CD4-positive, alpha-beta memory T cell (primary cell): ENCODE measurements at regions of chr10 and their contacts with region 1.

Region 1: GRCh38 chr10:84537447-84537931 is 209.1 kb downstream of the CCSER2 start:
- DNase-seq: peak; percentile 44 to 60 (median 57)
- H3K4me3 ChIP-seq: no peak overlapping the region
- H3K4me3 Mint-ChIP-seq: peak overlapping the region in 1 of 8 donors; percentile 54
- H3K27ac ChIP-seq: no peak overlapping the region
- H3K27ac Mint-ChIP-seq: no peak overlapping the region
- H3K4me1 ChIP-seq: peaks cover 7% of the 10 kb centered on the region
- H3K4me1 Mint-ChIP-seq: peaks cover 7 to 14% (median 9%) of the 10 kb centered on the region in 4 donors
- H3K27me3 ChIP-seq: no peaks in the 10 kb centered on the region
- H3K27me3 Mint-ChIP-seq: peaks cover 8 to 23% of the 10 kb centered on the region in 2 donors

Region 2: GRCh38 chr10:84147347-84147746 is 390.1 kb before region 1 on chr10:
- CTCF ChIA-PET with region 1: interaction called, 11 read pairs
- POLR2A ChIA-PET with region 1: no interaction called
- intact Hi-C with region 1: loop called (anchors 10 kb)
- DNase-seq: no peak
- H3K4me3 ChIP-seq: no peak overlapping the region
- H3K4me3 Mint-ChIP-seq: no peak overlapping the region
- H3K27ac ChIP-seq: no peak overlapping the region
- H3K27ac Mint-ChIP-seq: peak overlapping the region in 2 of 7 donors; percentile 50 to 65
- H3K4me1 ChIP-seq: no peaks in the 10 kb centered on the region
- H3K4me1 Mint-ChIP-seq: peaks cover 0 to 9% (median 2%) of the 10 kb centered on the region in 4 donors
- H3K27me3 ChIP-seq: no peaks in the 10 kb centered on the region
- H3K27me3 Mint-ChIP-seq: no peaks in the 10 kb centered on the region

Region 3: DNA sequence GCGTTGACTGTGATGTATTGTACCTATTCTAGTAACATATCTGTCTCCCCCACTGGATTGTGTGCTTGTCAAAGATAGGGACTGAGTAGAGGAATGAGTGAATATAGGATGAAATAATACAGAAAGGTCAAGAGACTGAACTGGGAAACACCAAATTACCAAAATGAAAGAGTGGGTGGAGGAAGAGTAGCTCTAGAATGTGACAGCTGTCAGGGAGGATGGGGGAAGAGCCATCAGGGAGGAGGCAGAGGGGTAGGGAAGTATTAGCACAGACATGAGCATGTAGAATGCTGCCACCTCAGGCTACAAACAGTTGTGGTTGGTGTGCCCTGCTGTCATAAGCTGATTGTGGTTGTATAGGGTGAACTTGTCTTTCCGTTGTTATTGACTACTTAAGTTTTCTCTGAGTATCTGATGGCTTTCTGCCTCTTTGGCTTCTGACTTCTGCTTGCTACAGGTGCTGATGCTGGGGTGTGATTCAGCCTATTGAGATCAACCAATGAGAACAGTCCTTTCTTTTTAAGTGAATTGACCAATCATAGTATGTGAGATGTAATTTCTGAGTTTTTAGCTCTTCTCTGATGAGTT is 203.5 kb before region 1 on chr10:
- CTCF ChIA-PET with region 1: interaction called, 8 read pairs
- POLR2A ChIA-PET with region 1: interaction called, 3 read pairs
- intact Hi-C with region 1: loop called (anchors 1 kb)
- DNase-seq: peak; percentile 85 to 95 (median 90)
- H3K4me3 ChIP-seq: peak overlapping the region in 1 of 2 donors; percentile 46
- H3K4me3 Mint-ChIP-seq: peak overlapping the region; percentile 8 to 78 (median 68)
- H3K27ac ChIP-seq: peak overlapping the region; percentile 62
- H3K27ac Mint-ChIP-seq: peak overlapping the region in 4 of 7 donors; percentile 93 to 100 (median 95)
- H3K4me1 ChIP-seq: peaks cover 91% of the 10 kb centered on the region
- H3K4me1 Mint-ChIP-seq: peaks cover 36 to 58% (median 39%) of the 10 kb centered on the region in 4 donors
- H3K27me3 ChIP-seq: no peaks in the 10 kb centered on the region
- H3K27me3 Mint-ChIP-seq: no peaks in the 10 kb centered on the region

Region 4: DNA sequence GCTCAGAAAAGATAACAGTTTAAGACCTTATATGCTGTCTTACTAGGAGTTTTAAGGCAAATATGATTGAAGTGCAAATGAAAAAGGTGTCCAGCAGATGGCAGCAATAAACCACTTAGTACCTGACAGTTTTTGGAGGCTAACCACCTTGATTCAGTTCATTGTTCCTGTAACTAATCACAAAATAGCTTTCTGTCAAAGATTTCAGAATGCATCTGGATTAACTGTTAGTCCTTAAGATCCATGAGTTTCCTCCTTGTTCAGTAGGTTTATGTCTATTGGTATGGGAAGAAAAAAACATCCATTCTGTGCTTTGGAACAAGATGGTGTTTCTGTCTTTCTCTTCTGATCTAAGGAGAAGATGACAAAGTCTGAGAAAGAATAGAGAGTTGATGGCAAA is 162.5 kb before region 1 on chr10:
- CTCF ChIA-PET with region 1: interaction called, 40 read pairs
- POLR2A ChIA-PET with region 1: interaction called, 5 read pairs
- intact Hi-C with region 1: loop called (anchors 1 kb)
- DNase-seq: peak; percentile 35 to 57 (median 51)
- H3K4me3 ChIP-seq: no peak overlapping the region
- H3K4me3 Mint-ChIP-seq: peak overlapping the region in 2 of 8 donors; percentile 7 to 45
- H3K27ac ChIP-seq: no peak overlapping the region
- H3K27ac Mint-ChIP-seq: peak overlapping the region; percentile 1 to 61 (median 29)
- H3K4me1 ChIP-seq: peaks cover 8% of the 10 kb centered on the region
- H3K4me1 Mint-ChIP-seq: peaks cover 26 to 58% (median 29%) of the 10 kb centered on the region in 4 donors
- H3K27me3 ChIP-seq: no peaks in the 10 kb centered on the region
- H3K27me3 Mint-ChIP-seq: no peaks in the 10 kb centered on the region

Region 5: DNA sequence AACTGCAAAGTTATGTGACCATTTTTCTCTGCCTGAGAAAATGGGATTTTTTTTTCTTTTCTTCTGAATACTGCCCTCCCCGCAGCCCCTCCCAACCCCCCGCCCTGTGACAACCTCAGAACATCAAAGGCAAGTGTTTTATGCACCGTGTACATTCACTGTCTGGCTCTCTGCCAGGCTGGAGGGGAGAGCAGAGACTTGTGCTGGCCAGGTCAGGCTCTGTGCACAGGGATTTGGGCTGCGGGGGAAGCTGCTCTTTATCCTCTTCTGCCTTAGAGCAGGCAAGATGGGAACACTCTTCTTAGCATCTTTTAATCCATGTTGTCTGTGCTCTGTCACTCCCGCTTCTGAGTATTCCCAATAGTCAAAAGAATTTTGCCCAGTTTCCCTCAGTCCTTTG is 14.0 kb before region 1 on chr10:
- CTCF ChIA-PET with region 1: interaction called, 16 read pairs
- POLR2A ChIA-PET with region 1: no interaction called
- intact Hi-C with region 1: no loop called
- DNase-seq: no peak
- H3K4me3 ChIP-seq: no peak overlapping the region
- H3K4me3 Mint-ChIP-seq: no peak overlapping the region
- H3K27ac ChIP-seq: no peak overlapping the region
- H3K27ac Mint-ChIP-seq: peak overlapping the region in 2 of 7 donors; percentile 48 to 54
- H3K4me1 ChIP-seq: no peaks in the 10 kb centered on the region
- H3K4me1 Mint-ChIP-seq: peaks cover 0 to 9% (median 5%) of the 10 kb centered on the region in 4 donors
- H3K27me3 ChIP-seq: no peaks in the 10 kb centered on the region
- H3K27me3 Mint-ChIP-seq: peaks cover 2% of the 10 kb centered on the region in 2 donors